A673 (cell line): ENCODE measurements at regions of chr6 and their contacts with region 1.

Region 1: DNA sequence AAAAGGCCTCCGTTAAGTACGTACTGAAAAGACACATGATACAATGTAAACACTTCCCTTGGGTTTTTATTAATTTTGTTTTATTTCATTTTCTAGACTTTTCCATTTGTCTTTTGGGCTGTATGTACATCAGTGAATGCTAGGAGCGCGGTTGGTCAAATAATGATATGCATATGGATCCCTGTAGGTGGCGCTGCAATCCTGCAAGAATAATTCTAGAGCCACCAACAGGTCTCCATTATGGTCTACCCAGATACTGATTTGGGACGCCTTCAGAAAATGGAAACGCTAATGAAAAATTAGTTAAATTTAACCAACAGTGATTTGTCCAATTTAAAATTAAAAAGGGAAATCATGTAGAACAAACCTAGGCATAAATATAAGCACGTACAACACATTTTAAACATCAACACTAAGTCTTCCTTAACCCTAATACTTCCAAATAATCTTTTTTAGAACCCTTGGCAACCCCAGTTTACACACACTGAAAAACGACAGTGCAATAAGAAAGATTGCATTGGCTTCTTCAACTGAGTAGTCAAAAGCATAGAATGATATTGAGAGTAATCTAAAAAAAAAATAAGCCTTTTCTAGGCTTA is 433.5 kb downstream of the RFPL4B start:
- DNase-seq: peak; percentile 88
- H3K4me3 ChIP-seq: no peak overlapping the region
- H3K27ac ChIP-seq: no peak overlapping the region
- H3K4me1 ChIP-seq: peaks cover 5% of the 10 kb centered on the region
- H3K27me3 ChIP-seq: no peaks in the 10 kb centered on the region
- CTCF ChIP-seq: peak; percentile 82

Region 2: DNA sequence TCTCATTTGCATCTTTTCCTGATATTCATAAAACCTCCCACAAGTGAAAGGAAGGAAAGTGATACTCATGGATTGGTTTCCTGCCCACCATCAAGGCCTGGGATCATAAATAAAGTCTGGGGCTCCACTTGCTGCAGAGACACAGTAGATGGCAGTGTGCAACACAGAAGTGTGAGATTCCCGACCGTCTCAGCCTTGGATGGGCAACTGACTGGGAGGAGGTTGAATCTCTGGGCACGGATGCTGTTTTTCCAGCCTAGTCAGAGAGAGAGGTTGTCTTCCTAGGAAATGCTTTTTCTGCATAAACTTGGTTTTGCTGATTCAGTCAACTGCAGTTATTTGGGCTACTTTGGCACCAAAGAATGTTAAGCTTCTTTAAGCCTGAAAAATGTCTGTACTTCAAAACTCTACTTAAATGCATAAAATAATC is 443.4 kb before region 1 on chr6:
- CTCF ChIA-PET with region 1: no interaction called
- POLR2A ChIA-PET with region 1: no interaction called
- intact Hi-C with region 1: loop called (anchors 5 kb)
- DNase-seq: peak; percentile 90
- H3K4me3 ChIP-seq: no peak overlapping the region
- H3K27ac ChIP-seq: no peak overlapping the region
- H3K4me1 ChIP-seq: peaks cover 16% of the 10 kb centered on the region
- H3K27me3 ChIP-seq: peaks cover 26% of the 10 kb centered on the region
- CTCF ChIP-seq: peak; percentile 89

Region 3: GRCh38 chr6:113182370-113183141 is 402.0 kb after region 1 on chr6:
- CTCF ChIA-PET with region 1: no interaction called
- POLR2A ChIA-PET with region 1: no interaction called
- intact Hi-C with region 1: loop called (anchors 2 kb)
- DNase-seq: peak; percentile 72
- H3K4me3 ChIP-seq: no peak overlapping the region
- H3K27ac ChIP-seq: no peak overlapping the region
- H3K4me1 ChIP-seq: peaks cover 8% of the 10 kb centered on the region
- H3K27me3 ChIP-seq: no peaks in the 10 kb centered on the region
- CTCF ChIP-seq: 0 out of 2 replicates have a peak, but pooled peaks have one; percentile 14

Region 4: GRCh38 chr6:113495506-113495905 is 714.9 kb after region 1 on chr6:
- CTCF ChIA-PET with region 1: no interaction called
- POLR2A ChIA-PET with region 1: no interaction called
- intact Hi-C with region 1: loop called (anchors 10 kb)
- DNase-seq: peak; percentile 93
- H3K4me3 ChIP-seq: no peak overlapping the region
- H3K27ac ChIP-seq: peak overlapping the region; percentile 59
- H3K4me1 ChIP-seq: peaks cover 23% of the 10 kb centered on the region
- H3K27me3 ChIP-seq: no peaks in the 10 kb centered on the region
- CTCF ChIP-seq: no peak

Region 5: GRCh38 chr6:113936093-113936934 is 1155.7 kb after region 1 on chr6:
- CTCF ChIA-PET with region 1: no interaction called
- POLR2A ChIA-PET with region 1: no interaction called
- intact Hi-C with region 1: loop called (anchors 10 kb)
- DNase-seq: peak; percentile 76
- H3K4me3 ChIP-seq: no peak overlapping the region
- H3K27ac ChIP-seq: no peak overlapping the region
- H3K4me1 ChIP-seq: no peaks in the 10 kb centered on the region
- H3K27me3 ChIP-seq: no peaks in the 10 kb centered on the region
- CTCF ChIP-seq: peak; percentile 78